ENCODE measurements at regions of chr12 and their contacts with region 1.

Region 1: DNA sequence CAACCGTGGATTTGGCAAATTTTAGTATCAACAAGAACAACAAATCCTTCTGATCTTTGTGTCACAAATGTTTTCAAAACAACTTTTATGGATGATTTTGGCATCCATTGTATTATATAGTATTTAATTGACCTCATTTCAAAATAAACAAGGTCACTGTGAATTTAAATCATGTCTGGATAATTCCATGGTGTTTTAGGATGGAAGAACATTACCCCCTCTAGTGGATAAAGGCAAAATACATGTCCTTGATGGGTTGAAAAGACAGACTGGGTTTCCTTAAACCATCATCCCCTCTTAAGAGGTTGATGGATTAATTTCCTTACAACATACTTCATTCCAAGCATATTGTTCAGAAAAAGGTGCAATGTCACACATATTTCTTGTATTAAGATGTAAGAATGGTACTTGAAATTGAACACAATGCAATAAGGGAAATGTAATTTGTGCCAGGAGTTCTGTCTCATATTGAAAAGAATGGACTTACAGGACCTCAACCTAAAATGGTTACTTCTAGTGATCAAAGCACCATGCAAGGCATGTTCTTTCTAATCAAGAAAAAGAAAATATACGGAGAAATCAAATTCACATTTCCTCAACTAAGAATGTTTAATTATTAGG is 352.0 kb downstream of the BCAT1 start:
- DNase-seq: no peak
- ATAC-seq: no peak

Region 2: GRCh38 chr12:23204933-23205778 is 1391.7 kb before region 1 on chr12:
- intact Hi-C with region 1: loop called in 1 of 2 experiments (anchors 10 kb)
- DNase-seq: no peak
- ATAC-seq: peak; percentile 65

Region 3: GRCh38 chr12:25308756-25309155 is 711.9 kb after region 1 on chr12:
- intact Hi-C with region 1: no loop called
- DNase-seq: no peak
- ATAC-seq: no peak